Left ventricle myocardium inferior (tissue), 1 donor: ENCODE measurements at regions of chr5 and their contacts with region 1.

Region 1: GRCh38 chr5:135944967-135945560 is 9.7 kb downstream of the LECT2 start:
- DNase-seq: no peak
- H3K4me3 ChIP-seq: no peak overlapping the region
- H3K27ac ChIP-seq: no peak overlapping the region
- H3K4me1 ChIP-seq: no peaks in the 10 kb centered on the region
- H3K27me3 ChIP-seq: peaks cover 9% of the 10 kb centered on the region
- CTCF ChIP-seq: peak; percentile 79

Region 2: GRCh38 chr5:136062366-136063274 is 117.6 kb after region 1 on chr5:
- intact Hi-C with region 1: loop called (anchors 5 kb)
- DNase-seq: no peak
- H3K4me3 ChIP-seq: no peak overlapping the region
- H3K27ac ChIP-seq: no peak overlapping the region
- H3K4me1 ChIP-seq: peaks cover 39% of the 10 kb centered on the region
- H3K27me3 ChIP-seq: no peaks in the 10 kb centered on the region
- CTCF ChIP-seq: peak; percentile 61

Region 3: GRCh38 chr5:136080483-136081216 is 135.6 kb after region 1 on chr5:
- intact Hi-C with region 1: loop called (anchors 5 kb)
- DNase-seq: peak; percentile 92
- H3K4me3 ChIP-seq: peak overlapping the region; percentile 65
- H3K27ac ChIP-seq: peak overlapping the region; percentile 91
- H3K4me1 ChIP-seq: peaks cover 53% of the 10 kb centered on the region
- H3K27me3 ChIP-seq: no peaks in the 10 kb centered on the region
- CTCF ChIP-seq: no peak

Region 4: GRCh38 chr5:136174021-136174659 is 229.1 kb after region 1 on chr5:
- intact Hi-C with region 1: loop called (anchors 10 kb)
- DNase-seq: no peak
- H3K4me3 ChIP-seq: no peak overlapping the region
- H3K27ac ChIP-seq: no peak overlapping the region
- H3K4me1 ChIP-seq: peaks cover 13% of the 10 kb centered on the region
- H3K27me3 ChIP-seq: no peaks in the 10 kb centered on the region
- CTCF ChIP-seq: peak; percentile 81